ENCODE measurements at regions of chr22 and their contacts with region 1.

Region 1: GRCh38 chr22:30423982-30424963 is 1.3 kb upstream of the MTFP1 start:
- DNase-seq: peak; percentile 99
- ATAC-seq: peak; percentile 91
- H3K4me3 ChIP-seq: peak overlapping the region; percentile 54 to 84 (median 76)
- H3K4me3 Mint-ChIP-seq: peak overlapping the region; percentile 99
- H3K27ac ChIP-seq: peak overlapping the region; percentile 78 to 89
- H3K27ac Mint-ChIP-seq: peak overlapping the region; percentile 100
- H3K4me1 ChIP-seq: peaks cover 22 to 40% of the 10 kb centered on the region in 2 donors
- H3K4me1 Mint-ChIP-seq: peaks cover 48% of the 10 kb centered on the region
- H3K27me3 ChIP-seq: no peaks in the 10 kb centered on the region
- H3K27me3 Mint-ChIP-seq: no peaks in the 10 kb centered on the region
- CTCF ChIP-seq: no peak

Region 2: DNA sequence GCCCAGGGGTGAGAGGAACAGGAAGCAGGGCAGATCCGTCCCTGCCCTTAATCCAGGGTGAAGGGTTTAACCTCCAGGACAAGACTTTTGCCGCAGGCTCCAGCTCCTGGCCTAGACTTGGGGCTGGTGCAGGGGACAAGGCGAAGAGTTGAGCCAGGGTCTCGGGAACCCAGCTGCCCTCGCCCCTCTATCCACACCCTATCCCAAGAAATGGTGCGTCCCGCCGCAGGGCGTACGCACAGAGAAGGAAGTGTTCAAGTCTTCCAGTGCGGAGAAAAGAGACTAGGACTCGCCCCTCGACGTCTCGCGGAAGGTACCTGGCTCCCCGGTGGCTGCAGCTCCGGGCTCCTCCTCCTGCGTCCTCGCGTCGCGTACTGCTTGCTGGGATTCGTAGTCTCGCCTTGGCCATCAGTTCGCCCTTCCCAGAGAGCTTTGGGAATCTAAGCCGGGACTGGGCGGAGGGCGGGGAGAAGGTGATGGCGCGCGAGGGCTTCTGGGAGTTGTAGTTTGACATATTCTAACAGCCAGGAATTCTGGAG is 657.6 kb before region 1 on chr22 and contains the start of gene ZMAT5:
- CTCF ChIA-PET with region 1: no interaction called
- POLR2A ChIA-PET with region 1: no interaction called
- intact Hi-C with region 1: loop called (anchors 5 kb)
- DNase-seq: peak; percentile 95
- ATAC-seq: peak; percentile 97
- H3K4me3 ChIP-seq: peak within 1 kb of the TSS; percentile 73 to 99 (median 87)
- H3K4me3 Mint-ChIP-seq: peak within 1 kb of the TSS; percentile 99
- H3K27ac ChIP-seq: peak within 1 kb of the TSS; percentile 46 to 80
- H3K27ac Mint-ChIP-seq: peak within 1 kb of the TSS; percentile 95
- H3K4me1 ChIP-seq: peaks cover 17 to 20% of the 10 kb centered on the region in 2 donors
- H3K4me1 Mint-ChIP-seq: peaks cover 36% of the 10 kb centered on the region
- H3K27me3 ChIP-seq: no peaks in the 10 kb centered on the region
- H3K27me3 Mint-ChIP-seq: no peaks in the 10 kb centered on the region
- CTCF ChIP-seq: no peak
- total RNA-seq, gene ZMAT5: 16.5 and 17.8 TPM in 2 replicates

Region 3: GRCh38 chr22:30326706-30327362 is 97.4 kb before region 1 on chr22 and contains the start of gene TBC1D10A:
- CTCF ChIA-PET with region 1: no interaction called
- POLR2A ChIA-PET with region 1: interaction called, 3 read pairs
- intact Hi-C with region 1: loop called (anchors 1 kb)
- DNase-seq: peak; percentile 95
- ATAC-seq: peak; percentile 96
- H3K4me3 ChIP-seq: peak within 1 kb of the TSS; percentile 40 to 92 (median 83)
- H3K4me3 Mint-ChIP-seq: peak within 1 kb of the TSS; percentile 86
- H3K27ac ChIP-seq: peak within 1 kb of the TSS; percentile 57 to 88
- H3K27ac Mint-ChIP-seq: peak within 1 kb of the TSS; percentile 93
- H3K4me1 ChIP-seq: peaks cover 30 to 43% of the 10 kb centered on the region in 2 donors
- H3K4me1 Mint-ChIP-seq: peaks cover 49% of the 10 kb centered on the region
- H3K27me3 ChIP-seq: no peaks in the 10 kb centered on the region
- H3K27me3 Mint-ChIP-seq: no peaks in the 10 kb centered on the region
- CTCF ChIP-seq: no peak
- total RNA-seq, gene TBC1D10A: 44.7 and 45.2 TPM in 2 replicates

Region 4: GRCh38 chr22:30372915-30373314 is 51.4 kb before region 1 on chr22:
- CTCF ChIA-PET with region 1: no interaction called
- POLR2A ChIA-PET with region 1: no interaction called
- intact Hi-C with region 1: no loop called
- DNase-seq: no peak
- ATAC-seq: no peak
- H3K4me3 ChIP-seq: no peak overlapping the region
- H3K4me3 Mint-ChIP-seq: no peak overlapping the region
- H3K27ac ChIP-seq: no peak overlapping the region
- H3K27ac Mint-ChIP-seq: no peak overlapping the region
- H3K4me1 ChIP-seq: no peaks in the 10 kb centered on the region
- H3K4me1 Mint-ChIP-seq: no peaks in the 10 kb centered on the region
- H3K27me3 ChIP-seq: no peaks in the 10 kb centered on the region
- H3K27me3 Mint-ChIP-seq: no peaks in the 10 kb centered on the region
- CTCF ChIP-seq: no peak

Region 5: GRCh38 chr22:30435674-30436126 is 11.4 kb after region 1 on chr22:
- CTCF ChIA-PET with region 1: interaction called, 10 read pairs
- POLR2A ChIA-PET with region 1: interaction called, 7 read pairs
- intact Hi-C with region 1: loop called (anchors 1 kb)
- DNase-seq: peak; percentile 77
- ATAC-seq: peak; percentile 72
- H3K4me3 ChIP-seq: peak overlapping the region in 3 of 5 experiments; percentile 2 to 40 (median 35)
- H3K4me3 Mint-ChIP-seq: peak overlapping the region; percentile 77
- H3K27ac ChIP-seq: peak overlapping the region; percentile 68 to 77
- H3K27ac Mint-ChIP-seq: peak overlapping the region; percentile 91
- H3K4me1 ChIP-seq: peaks cover 8 to 16% of the 10 kb centered on the region in 2 donors
- H3K4me1 Mint-ChIP-seq: peaks cover 14% of the 10 kb centered on the region
- H3K27me3 ChIP-seq: peaks cover 0 to 15% (median 1%) of the 10 kb centered on the region in 4 experiments
- H3K27me3 Mint-ChIP-seq: peaks cover 17% of the 10 kb centered on the region
- CTCF ChIP-seq: no peak

Region 6: DNA sequence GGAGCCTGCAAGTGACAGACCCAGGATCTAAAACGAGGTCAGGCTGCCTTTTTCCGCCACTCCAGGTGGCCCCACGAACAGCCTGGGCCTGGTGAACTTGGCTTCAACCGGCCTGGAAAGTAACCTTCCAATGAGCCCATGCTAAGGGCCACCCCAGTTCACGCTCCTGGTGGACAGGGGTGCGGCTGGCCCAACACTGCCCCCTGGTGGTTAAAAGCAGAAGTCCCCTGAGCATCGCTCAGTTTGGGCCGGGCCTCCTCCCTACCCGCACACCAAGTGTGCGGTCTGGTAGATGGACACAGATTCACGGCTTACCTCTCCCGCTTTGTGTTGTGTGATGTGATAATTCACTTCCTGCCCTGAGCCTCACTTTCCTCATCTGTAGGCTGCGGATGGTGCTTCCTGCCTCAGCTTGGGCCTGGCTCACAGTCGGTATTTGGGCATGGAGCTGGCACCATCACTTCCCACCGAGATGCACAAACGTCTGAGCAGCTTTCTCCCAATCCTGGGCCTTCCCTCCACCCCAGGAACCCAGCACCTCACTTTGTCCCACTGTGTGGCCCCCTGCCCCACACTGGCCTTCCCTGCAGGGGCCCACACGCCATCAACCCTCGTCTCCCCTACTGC is 61.2 kb after region 1 on chr22:
- CTCF ChIA-PET with region 1: interaction called, 3 read pairs
- POLR2A ChIA-PET with region 1: no interaction called
- intact Hi-C with region 1: loop called (anchors 2 kb)
- DNase-seq: peak; percentile 80
- ATAC-seq: peak; percentile 96
- H3K4me3 ChIP-seq: no peak overlapping the region
- H3K4me3 Mint-ChIP-seq: no peak overlapping the region
- H3K27ac ChIP-seq: no peak overlapping the region
- H3K27ac Mint-ChIP-seq: no peak overlapping the region
- H3K4me1 ChIP-seq: no peaks in the 10 kb centered on the region
- H3K4me1 Mint-ChIP-seq: no peaks in the 10 kb centered on the region
- H3K27me3 ChIP-seq: peaks cover 0 to 3% (median 0%) of the 10 kb centered on the region in 4 experiments
- H3K27me3 Mint-ChIP-seq: peaks cover 20% of the 10 kb centered on the region
- CTCF ChIP-seq: peak; percentile 97

Region 7: DNA sequence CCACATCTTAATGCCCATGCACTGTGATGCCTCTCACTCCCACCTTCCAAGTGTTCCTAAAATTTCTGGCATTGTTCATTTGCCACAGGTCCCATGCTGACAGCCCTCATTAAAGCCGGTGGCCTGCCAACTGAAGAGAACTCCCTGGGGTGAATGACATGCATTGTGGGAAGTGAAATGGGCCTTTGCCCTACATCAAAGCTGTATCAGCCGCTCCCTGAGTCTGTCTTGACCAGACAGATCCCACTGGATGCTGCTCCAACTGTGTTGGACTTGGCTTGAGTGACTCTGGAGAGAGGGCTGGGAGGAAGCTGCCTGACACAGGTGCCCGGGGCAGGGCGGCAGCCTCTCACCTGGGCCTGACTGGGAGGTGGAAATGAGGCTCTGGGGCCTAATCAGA is 90.0 kb after region 1 on chr22:
- CTCF ChIA-PET with region 1: no interaction called
- POLR2A ChIA-PET with region 1: no interaction called
- intact Hi-C with region 1: no loop called
- DNase-seq: no peak
- ATAC-seq: no peak
- H3K4me3 ChIP-seq: no peak overlapping the region
- H3K4me3 Mint-ChIP-seq: no peak overlapping the region
- H3K27ac ChIP-seq: no peak overlapping the region
- H3K27ac Mint-ChIP-seq: no peak overlapping the region
- H3K4me1 ChIP-seq: no peaks in the 10 kb centered on the region
- H3K4me1 Mint-ChIP-seq: no peaks in the 10 kb centered on the region
- H3K27me3 ChIP-seq: no peaks in the 10 kb centered on the region
- H3K27me3 Mint-ChIP-seq: peaks cover 3% of the 10 kb centered on the region
- CTCF ChIP-seq: no peak

Region 8: DNA sequence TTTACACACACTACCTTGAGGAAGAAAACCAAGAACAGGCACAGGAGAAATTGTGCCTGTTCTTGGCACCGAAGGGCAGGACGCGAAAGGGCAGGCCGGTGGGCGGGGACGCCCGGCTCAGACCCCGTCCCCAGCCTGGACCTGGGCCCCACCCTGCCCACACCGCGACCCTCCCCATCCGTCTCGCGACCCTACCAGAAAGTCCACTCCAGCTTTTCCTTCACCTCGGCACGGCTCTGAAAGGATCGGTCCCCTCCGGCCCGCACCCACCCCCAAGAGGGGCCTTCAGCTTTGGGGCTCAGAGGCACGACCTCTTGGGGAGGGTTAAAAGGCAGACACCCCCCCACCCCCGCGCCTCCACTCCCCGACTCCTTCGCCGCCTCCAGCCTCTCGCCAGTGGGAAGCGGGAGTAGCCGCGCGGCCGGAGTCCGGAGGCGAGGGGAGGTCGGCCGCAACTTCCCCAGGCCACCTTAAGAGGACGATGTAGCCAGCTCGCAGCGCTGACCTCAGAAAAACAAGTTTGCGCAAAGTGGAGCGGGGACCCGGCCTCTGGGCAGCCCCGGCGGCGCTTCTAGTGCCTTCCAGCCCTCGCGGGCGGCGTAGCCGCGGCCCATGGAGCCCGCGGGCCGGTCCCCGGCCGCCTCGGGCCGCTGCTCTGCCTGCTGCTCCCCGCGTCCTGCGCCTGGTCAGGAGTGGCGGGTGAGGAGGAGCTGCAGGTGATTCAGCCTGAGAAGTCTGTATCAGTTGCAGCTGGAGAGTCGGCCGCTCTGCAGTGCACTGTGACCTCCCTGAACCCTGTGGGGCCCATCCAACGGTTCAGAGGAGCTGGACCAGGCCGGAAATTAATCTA is 117.9 kb after region 1 on chr22:
- CTCF ChIA-PET with region 1: no interaction called
- POLR2A ChIA-PET with region 1: no interaction called
- intact Hi-C with region 1: no loop called
- DNase-seq: no peak
- ATAC-seq: no peak
- H3K4me3 ChIP-seq: no peak overlapping the region
- H3K4me3 Mint-ChIP-seq: no peak overlapping the region
- H3K27ac ChIP-seq: no peak overlapping the region
- H3K27ac Mint-ChIP-seq: no peak overlapping the region
- H3K4me1 ChIP-seq: no peaks in the 10 kb centered on the region
- H3K4me1 Mint-ChIP-seq: peaks cover 5% of the 10 kb centered on the region
- H3K27me3 ChIP-seq: peaks cover 0 to 20% (median 4%) of the 10 kb centered on the region in 4 experiments
- H3K27me3 Mint-ChIP-seq: peaks cover 39% of the 10 kb centered on the region
- CTCF ChIP-seq: no peak

Measured in B cell (primary cell).